Activated CD4-positive, alpha-beta T cell treated with anti-CD3 and anti-CD28 coated beads for 36 hours (primary cell): ENCODE measurements at regions of chr1 and their contacts with region 1.

Region 1: GRCh38 chr1:94237291-94238226 is at the start of gene ARHGAP29:
- DNase-seq: peak; percentile 84
- ATAC-seq: peak; percentile 97
- H3K4me3 Mint-ChIP-seq: peak within 1 kb of the TSS; percentile 56
- H3K27ac Mint-ChIP-seq: no peak within 1 kb of the TSS
- H3K4me1 Mint-ChIP-seq: peaks cover 13% of the 10 kb centered on the region
- H3K27me3 Mint-ChIP-seq: peaks cover 70% of the 10 kb centered on the region
- total RNA-seq, gene ARHGAP29: 0.21 to 0.23 TPM

Region 2: GRCh38 chr1:94061513-94062443 is 175.8 kb before region 1 on chr1:
- CTCF ChIA-PET with region 1: no interaction called
- POLR2A ChIA-PET with region 1: no interaction called
- intact Hi-C with region 1: loop called in 1 of 2 experiments (anchors 10 kb)
- DNase-seq: peak; percentile 64
- ATAC-seq: no peak
- H3K4me3 Mint-ChIP-seq: no peak overlapping the region
- H3K27ac Mint-ChIP-seq: no peak overlapping the region
- H3K4me1 Mint-ChIP-seq: no peaks in the 10 kb centered on the region
- H3K27me3 Mint-ChIP-seq: peaks cover 9% of the 10 kb centered on the region

Region 3: GRCh38 chr1:94383966-94384408 is 146.4 kb after region 1 on chr1:
- CTCF ChIA-PET with region 1: no interaction called
- POLR2A ChIA-PET with region 1: no interaction called
- intact Hi-C with region 1: loop called in 1 of 2 experiments (anchors 5 kb)
- DNase-seq: peak; percentile 22
- ATAC-seq: peak; percentile 76
- H3K4me3 Mint-ChIP-seq: peak overlapping the region; percentile 61
- H3K27ac Mint-ChIP-seq: peak overlapping the region; percentile 92
- H3K4me1 Mint-ChIP-seq: peaks cover 62% of the 10 kb centered on the region
- H3K27me3 Mint-ChIP-seq: no peaks in the 10 kb centered on the region

Region 4: GRCh38 chr1:94463765-94464330 is 226.3 kb after region 1 on chr1:
- CTCF ChIA-PET with region 1: no interaction called
- POLR2A ChIA-PET with region 1: no interaction called
- intact Hi-C with region 1: loop called (anchors 5 to 10 kb)
- DNase-seq: peak; percentile 13
- ATAC-seq: peak; percentile 61
- H3K4me3 Mint-ChIP-seq: no peak overlapping the region
- H3K27ac Mint-ChIP-seq: no peak overlapping the region
- H3K4me1 Mint-ChIP-seq: peaks cover 4% of the 10 kb centered on the region
- H3K27me3 Mint-ChIP-seq: no peaks in the 10 kb centered on the region

Region 5: DNA sequence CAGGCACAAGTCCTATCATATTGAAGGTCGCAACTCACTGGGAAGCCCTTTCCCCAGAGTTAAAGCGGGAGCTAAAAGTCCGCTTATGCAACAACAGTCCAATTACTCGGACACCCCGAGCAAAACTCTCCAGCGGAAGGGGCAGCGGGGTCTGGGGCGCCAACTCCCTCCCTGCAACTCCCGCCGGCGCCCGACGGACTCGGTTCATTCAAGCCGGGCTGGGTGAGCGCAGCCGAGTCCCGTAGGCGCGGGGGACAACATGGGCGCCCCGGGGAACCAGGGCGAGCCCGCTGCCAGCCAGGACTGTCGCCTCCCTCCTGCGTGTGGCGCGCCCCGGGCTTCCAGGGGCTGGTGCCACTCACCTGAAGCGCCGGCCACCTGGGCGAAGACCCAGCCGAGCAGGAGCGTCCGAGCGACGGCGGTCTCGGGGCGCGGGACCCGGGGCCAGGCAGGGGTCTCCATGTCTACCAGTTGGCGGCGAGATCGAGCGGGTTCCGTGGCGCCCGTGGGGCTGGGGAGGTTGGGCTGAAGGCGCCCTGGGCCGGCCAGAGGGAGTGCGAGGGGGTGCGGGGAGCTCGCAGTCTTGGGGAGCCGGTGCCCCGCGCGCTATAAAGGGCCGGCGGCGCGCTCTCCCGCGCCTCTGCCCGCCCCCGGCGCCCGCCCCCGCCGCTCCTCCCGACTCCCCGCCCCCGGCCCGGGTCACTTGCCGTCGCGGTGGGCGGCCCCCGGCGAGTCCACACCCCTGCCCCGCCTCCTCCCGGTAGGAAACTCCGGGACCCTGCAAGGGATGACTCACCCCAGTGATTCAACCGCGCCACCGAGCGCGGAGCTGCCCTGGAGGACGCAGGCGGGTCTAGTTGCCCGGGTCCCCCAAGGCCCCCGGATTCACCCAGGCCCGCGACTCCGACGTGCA is 303.9 kb after region 1 on chr1 and contains the start of gene F3:
- CTCF ChIA-PET with region 1: no interaction called
- POLR2A ChIA-PET with region 1: no interaction called
- intact Hi-C with region 1: loop called (anchors 5 kb)
- DNase-seq: peak; percentile 90
- ATAC-seq: peak; percentile 98
- H3K4me3 Mint-ChIP-seq: peak within 1 kb of the TSS; percentile 68
- H3K27ac Mint-ChIP-seq: no peak within 1 kb of the TSS
- H3K4me1 Mint-ChIP-seq: peaks cover 13% of the 10 kb centered on the region
- H3K27me3 Mint-ChIP-seq: peaks cover 64% of the 10 kb centered on the region
- total RNA-seq, gene F3: 0.07 TPM in 1 of 2 experiments, not detected in the other